ENCODE measurements at regions of chr1 and their contacts with region 1.

Region 1: GRCh38 chr1:9413148-9413876 is 120.6 kb downstream of the SPSB1 start:
- DNase-seq: peak in 2 of 3 donors; percentile 66 to 71
- H3K4me3 ChIP-seq: no peak overlapping the region
- H3K27ac ChIP-seq: no peak overlapping the region
- H3K4me1 ChIP-seq: peaks cover 0 to 27% (median 17%) of the 10 kb centered on the region in 4 experiments
- H3K27me3 ChIP-seq: no peaks in the 10 kb centered on the region

Region 2: DNA sequence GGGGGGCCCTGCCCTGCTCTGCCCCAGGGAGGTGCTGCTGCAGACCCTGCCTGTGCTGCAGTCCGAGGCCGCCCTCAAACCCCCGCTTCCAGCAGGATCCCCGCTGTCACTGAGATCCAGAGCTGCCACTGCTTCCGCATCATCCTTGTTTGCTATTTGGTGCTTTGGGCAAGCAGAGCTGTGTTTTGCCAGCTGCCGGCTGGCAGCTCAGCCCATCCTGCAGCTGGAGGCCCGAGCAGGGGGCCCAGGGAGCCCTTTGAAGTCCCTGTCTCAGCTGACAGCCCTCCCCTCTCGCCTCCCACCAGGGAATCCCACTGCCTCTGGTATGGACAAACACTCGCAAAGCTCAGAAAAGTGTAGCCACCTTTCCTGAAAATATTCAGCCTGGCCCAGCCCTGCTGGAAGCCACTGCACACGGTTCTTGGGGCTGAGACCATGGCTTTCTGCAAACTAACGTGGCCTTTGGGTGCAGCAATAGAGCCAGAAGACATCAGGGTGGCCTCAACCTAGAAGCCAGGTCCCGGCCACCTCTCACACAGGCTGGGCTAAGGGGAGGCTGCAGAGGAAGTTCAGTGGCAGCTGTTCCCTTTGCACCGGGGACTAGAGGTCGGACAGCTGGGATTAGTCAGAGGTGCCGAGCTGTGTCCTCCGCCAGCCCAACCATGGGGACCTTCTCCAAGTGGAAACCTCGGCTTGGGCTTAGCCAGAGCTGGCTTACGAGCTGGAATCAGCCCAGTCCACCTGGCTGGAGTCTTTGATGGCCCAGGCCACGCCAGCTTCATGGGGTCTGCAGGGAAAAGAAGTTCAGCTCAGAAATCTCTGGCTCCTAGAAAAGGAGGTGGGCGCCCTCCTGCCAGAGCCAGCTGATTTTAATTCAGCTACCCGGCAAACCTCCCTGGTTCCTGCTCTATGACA is 13.5 kb before region 1 on chr1:
- CTCF ChIA-PET with region 1: interaction called, 19 read pairs
- POLR2A ChIA-PET with region 1: interaction called, 6 read pairs
- DNase-seq: peak in 2 of 3 donors; percentile 87 to 91
- H3K4me3 ChIP-seq: peak overlapping the region in 3 of 7 experiments; percentile 19 to 38 (median 26)
- H3K27ac ChIP-seq: peak overlapping the region in 1 of 2 experiments; percentile 25
- H3K4me1 ChIP-seq: peaks cover 0 to 45% (median 39%) of the 10 kb centered on the region in 4 experiments
- H3K27me3 ChIP-seq: no peaks in the 10 kb centered on the region

Region 3: GRCh38 chr1:9438431-9439073 is 25.2 kb after region 1 on chr1:
- CTCF ChIA-PET with region 1: no interaction called
- POLR2A ChIA-PET with region 1: no interaction called
- DNase-seq: peak in 1 of 3 donors; percentile 19
- H3K4me3 ChIP-seq: no peak overlapping the region
- H3K27ac ChIP-seq: no peak overlapping the region
- H3K4me1 ChIP-seq: peaks cover 0 to 17% (median under 1%) of the 10 kb centered on the region in 4 experiments
- H3K27me3 ChIP-seq: peaks cover 0 to 4% (median 0%) of the 10 kb centered on the region in 5 experiments

Region 4: DNA sequence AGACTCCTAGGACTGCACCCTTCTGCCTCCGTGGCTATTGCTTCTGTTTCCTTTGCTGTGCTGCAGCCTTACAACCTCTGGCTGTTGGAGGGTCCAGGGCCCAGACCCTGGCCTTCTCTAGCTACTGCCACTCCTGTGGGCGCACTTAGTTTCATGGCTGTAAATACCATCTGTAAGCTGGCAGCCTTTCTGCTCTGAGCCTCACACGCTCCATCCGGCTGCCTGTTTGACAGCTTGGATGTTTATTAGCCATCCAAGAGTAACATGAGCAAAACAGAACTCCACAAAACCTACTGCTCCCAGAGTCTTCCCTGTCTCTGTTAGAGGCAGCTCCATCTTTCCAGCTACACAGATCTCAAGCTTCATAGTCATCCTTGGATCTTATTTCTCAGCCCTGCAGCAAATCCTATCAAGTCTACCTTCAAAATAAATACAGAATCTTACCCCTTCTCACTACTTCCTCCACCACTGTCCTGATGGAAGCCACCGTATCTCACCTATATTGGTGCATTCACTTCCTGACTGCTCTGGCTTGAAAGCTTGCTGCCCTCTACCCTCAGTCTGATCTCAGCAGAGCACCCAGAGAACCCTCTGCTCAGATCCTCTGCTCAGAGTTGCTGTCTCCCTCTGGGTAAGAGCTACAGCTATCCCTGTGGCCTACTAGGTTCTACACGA is 145.1 kb after region 1 on chr1:
- CTCF ChIA-PET with region 1: no interaction called
- POLR2A ChIA-PET with region 1: no interaction called
- DNase-seq: no peak
- H3K4me3 ChIP-seq: no peak overlapping the region
- H3K27ac ChIP-seq: no peak overlapping the region
- H3K4me1 ChIP-seq: peaks cover 0 to 4% (median 2%) of the 10 kb centered on the region in 4 experiments
- H3K27me3 ChIP-seq: no peaks in the 10 kb centered on the region

Measured in common myeloid progenitor, CD34-positive (primary cell).